Naive thymus-derived CD4-positive, alpha-beta T cell (primary cell): ENCODE measurements at regions of chr12 and their contacts with region 1.

Region 1: DNA sequence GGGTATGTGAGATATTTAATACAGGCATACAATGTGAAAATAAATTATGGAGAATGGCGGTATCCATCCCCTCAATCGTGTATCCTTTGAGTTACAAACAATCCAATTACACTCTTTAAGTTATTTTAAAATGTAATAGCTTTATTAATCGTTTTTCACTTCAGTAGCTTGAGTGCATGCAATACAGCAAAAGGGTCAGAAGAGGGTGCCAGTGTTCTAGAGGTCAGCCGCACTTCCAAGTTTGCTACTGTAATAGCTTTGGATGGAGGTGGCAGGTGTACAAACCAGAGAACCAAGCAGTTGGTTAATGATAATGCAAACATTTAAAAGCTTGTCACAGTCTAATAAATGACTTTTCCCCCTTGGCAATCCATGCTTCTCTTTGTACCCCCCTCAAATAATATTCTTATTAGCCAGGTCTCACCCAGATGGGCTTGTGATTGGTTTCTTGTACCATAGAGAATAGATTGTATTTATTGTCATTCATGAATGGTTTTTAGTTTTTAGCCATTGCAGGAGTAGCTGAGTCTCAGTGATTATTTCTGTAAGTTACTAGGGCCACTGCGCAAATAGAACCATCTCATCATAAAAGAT is 127.0 kb downstream of the ERC1 start:
- DNase-seq: peak; percentile 25 to 70 (median 63)
- ATAC-seq: peak; percentile 74
- H3K4me3 ChIP-seq: no peak overlapping the region
- H3K4me3 Mint-ChIP-seq: no peak overlapping the region
- H3K27ac ChIP-seq: no peak overlapping the region
- H3K27ac Mint-ChIP-seq: no peak overlapping the region
- H3K4me1 ChIP-seq: peaks cover 4 to 7% of the 10 kb centered on the region in 2 donors
- H3K4me1 Mint-ChIP-seq: peaks cover 7 to 16% (median 9%) of the 10 kb centered on the region in 7 donors
- H3K27me3 ChIP-seq: no peaks in the 10 kb centered on the region
- H3K27me3 Mint-ChIP-seq: no peaks in the 10 kb centered on the region

Region 2: GRCh38 chr12:728781-729180 is 389.3 kb before region 1 on chr12:
- CTCF ChIA-PET with region 1: no interaction called
- POLR2A ChIA-PET with region 1: no interaction called
- intact Hi-C with region 1: no loop called
- DNase-seq: peak in 7 of 9 donors; percentile 59 to 85 (median 76)
- ATAC-seq: peak; percentile 87
- H3K4me3 ChIP-seq: no peak overlapping the region
- H3K4me3 Mint-ChIP-seq: peak overlapping the region in 9 of 10 donors; percentile 15 to 68 (median 58)
- H3K27ac ChIP-seq: peak overlapping the region; percentile 74
- H3K27ac Mint-ChIP-seq: peak overlapping the region; percentile 74 to 97 (median 93)
- H3K4me1 ChIP-seq: peaks cover 30 to 71% of the 10 kb centered on the region in 2 donors
- H3K4me1 Mint-ChIP-seq: peaks cover 22 to 80% (median 76%) of the 10 kb centered on the region in 7 donors
- H3K27me3 ChIP-seq: no peaks in the 10 kb centered on the region
- H3K27me3 Mint-ChIP-seq: no peaks in the 10 kb centered on the region

Region 3: GRCh38 chr12:1130164-1130563 is 12.1 kb after region 1 on chr12:
- CTCF ChIA-PET with region 1: interaction called, 11 read pairs
- POLR2A ChIA-PET with region 1: interaction called, 3 read pairs
- intact Hi-C with region 1: no loop called
- DNase-seq: no peak
- ATAC-seq: no peak
- H3K4me3 ChIP-seq: no peak overlapping the region
- H3K4me3 Mint-ChIP-seq: no peak overlapping the region
- H3K27ac ChIP-seq: no peak overlapping the region
- H3K27ac Mint-ChIP-seq: peak overlapping the region in 1 of 9 donors; percentile 15
- H3K4me1 ChIP-seq: peaks cover 0 to 4% of the 10 kb centered on the region in 2 donors
- H3K4me1 Mint-ChIP-seq: peaks cover 8 to 62% (median 44%) of the 10 kb centered on the region in 7 donors
- H3K27me3 ChIP-seq: no peaks in the 10 kb centered on the region
- H3K27me3 Mint-ChIP-seq: no peaks in the 10 kb centered on the region

Region 4: DNA sequence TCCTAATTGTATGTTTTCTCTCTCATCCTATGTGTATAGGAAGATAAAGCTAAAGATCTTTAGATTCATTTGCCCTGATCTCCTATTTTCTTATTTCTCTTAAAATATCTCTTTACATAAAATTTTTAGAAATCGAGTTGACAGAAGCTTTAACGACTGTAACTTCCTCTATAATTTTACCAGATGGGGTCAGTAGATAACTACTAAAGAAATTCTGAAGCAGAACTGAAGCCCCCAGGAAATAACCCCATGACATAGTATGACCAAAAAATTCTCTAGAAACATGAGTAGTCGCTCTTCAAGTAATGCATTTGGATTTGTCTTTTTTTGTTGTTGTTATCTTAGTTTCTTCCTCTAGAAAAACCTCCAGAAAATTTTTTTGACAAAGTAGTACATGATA is 161.0 kb after region 1 on chr12:
- CTCF ChIA-PET with region 1: no interaction called
- POLR2A ChIA-PET with region 1: no interaction called
- intact Hi-C with region 1: loop called in 1 of 2 experiments (anchors 10 kb)
- DNase-seq: no peak
- ATAC-seq: no peak
- H3K4me3 ChIP-seq: no peak overlapping the region
- H3K4me3 Mint-ChIP-seq: no peak overlapping the region
- H3K27ac ChIP-seq: no peak overlapping the region
- H3K27ac Mint-ChIP-seq: peak overlapping the region in 1 of 9 donors; percentile 27
- H3K4me1 ChIP-seq: no peaks in the 10 kb centered on the region
- H3K4me1 Mint-ChIP-seq: peaks cover 5 to 22% (median 13%) of the 10 kb centered on the region in 7 donors
- H3K27me3 ChIP-seq: no peaks in the 10 kb centered on the region
- H3K27me3 Mint-ChIP-seq: no peaks in the 10 kb centered on the region

Region 5: DNA sequence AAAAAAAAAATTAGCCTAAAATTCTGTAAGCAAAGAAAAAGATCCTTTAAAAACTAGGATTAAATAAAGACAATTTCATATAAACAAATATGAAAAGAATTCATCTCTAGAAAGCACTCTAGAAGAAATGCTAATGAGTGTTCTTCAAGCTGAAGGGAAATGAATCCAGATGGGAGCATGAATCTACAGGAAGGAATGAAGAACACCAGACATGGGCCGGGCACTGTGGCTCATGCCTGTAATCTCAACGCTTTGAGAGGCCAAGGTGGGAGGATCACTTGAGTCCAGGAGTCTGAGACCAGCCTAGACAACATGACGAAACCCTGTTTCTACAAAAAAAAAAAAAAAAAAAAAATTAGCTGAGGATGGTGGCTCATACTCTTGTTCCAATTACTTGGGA is 179.1 kb after region 1 on chr12:
- CTCF ChIA-PET with region 1: no interaction called
- POLR2A ChIA-PET with region 1: no interaction called
- intact Hi-C with region 1: no loop called
- DNase-seq: no peak
- ATAC-seq: no peak
- H3K4me3 ChIP-seq: no peak overlapping the region
- H3K4me3 Mint-ChIP-seq: no peak overlapping the region
- H3K27ac ChIP-seq: no peak overlapping the region
- H3K27ac Mint-ChIP-seq: no peak overlapping the region
- H3K4me1 ChIP-seq: no peaks in the 10 kb centered on the region
- H3K4me1 Mint-ChIP-seq: peaks cover 0 to 2% (median 0%) of the 10 kb centered on the region in 7 donors
- H3K27me3 ChIP-seq: no peaks in the 10 kb centered on the region
- H3K27me3 Mint-ChIP-seq: no peaks in the 10 kb centered on the region

Region 6: DNA sequence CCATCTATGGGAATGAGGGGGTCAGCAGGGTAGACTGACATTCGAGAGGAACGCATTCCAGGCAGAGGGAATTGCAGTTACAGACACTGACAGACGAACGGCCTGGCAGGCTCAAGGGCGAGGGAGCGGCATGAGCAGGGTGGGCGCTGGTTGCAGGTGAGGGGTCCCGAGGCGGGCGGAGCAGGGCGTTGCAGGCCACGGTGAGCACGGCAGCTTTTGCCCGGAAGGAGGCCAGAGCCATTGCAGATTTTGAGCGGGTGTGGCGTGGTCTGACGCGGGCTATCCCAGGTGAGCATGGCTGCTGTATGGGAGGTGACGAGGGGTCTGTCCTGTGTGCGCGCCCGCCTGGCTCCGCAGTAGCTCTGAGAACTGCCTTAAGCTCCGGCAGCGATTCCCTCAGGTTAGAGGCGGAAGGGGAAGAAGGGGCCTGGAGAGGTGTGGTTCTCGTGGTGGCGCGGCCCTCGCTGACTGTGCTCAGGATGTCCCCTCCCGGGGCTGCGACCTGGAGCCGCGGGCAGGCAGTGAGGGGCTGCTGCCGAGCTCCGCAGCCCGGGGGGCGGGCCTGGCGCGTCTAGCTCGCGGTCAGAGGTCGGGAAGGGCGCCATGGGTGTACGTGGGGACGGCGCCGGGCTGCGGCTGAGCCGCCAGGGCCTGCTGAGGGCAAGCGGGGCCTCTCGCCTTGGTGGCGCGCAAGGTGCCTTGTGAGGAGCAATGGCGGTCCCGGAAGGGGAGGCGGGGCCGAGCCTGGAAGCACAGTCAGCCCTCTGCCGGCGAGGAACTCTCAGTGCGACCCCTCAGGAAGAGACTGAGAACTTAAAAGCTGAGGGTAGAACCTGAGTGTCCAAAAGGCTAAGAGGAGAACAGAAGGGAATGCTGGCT is 1111.8 kb after region 1 on chr12:
- CTCF ChIA-PET with region 1: no interaction called
- POLR2A ChIA-PET with region 1: no interaction called
- intact Hi-C with region 1: no loop called
- DNase-seq: no peak
- ATAC-seq: no peak
- H3K4me3 ChIP-seq: no peak overlapping the region
- H3K4me3 Mint-ChIP-seq: no peak overlapping the region
- H3K27ac ChIP-seq: no peak overlapping the region
- H3K27ac Mint-ChIP-seq: no peak overlapping the region
- H3K4me1 ChIP-seq: no peaks in the 10 kb centered on the region
- H3K4me1 Mint-ChIP-seq: no peaks in the 10 kb centered on the region
- H3K27me3 ChIP-seq: no peaks in the 10 kb centered on the region
- H3K27me3 Mint-ChIP-seq: peaks cover 12 to 37% (median 22%) of the 10 kb centered on the region in 5 donors